ENCODE measurements at regions of chr12 and their contacts with region 1.

Region 1: DNA sequence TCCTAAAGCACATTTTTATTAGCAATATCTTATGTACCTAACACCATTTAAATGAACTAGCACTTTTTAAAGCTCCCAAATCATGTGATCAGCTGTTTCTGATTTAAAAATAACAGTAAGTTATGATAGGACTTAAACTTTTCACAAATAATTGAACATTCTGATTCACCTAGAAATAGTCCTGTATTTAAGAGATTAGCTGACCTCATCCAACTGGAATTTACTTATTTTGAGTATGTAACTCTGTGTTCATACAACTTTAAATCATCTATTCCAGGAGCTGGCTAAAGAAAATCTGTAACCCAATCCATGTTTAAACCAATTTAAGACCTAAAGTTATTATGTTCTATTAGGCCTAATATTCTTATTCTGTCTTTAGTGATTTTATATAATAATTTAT is 184.3 kb downstream of the CCDC91 start:
- DNase-seq: no peak
- H3K4me3 ChIP-seq: no peak overlapping the region
- H3K27ac ChIP-seq: no peak overlapping the region
- H3K4me1 ChIP-seq: no peaks in the 10 kb centered on the region
- H3K27me3 ChIP-seq: no peaks in the 10 kb centered on the region
- CTCF ChIP-seq: no peak
- POLR2A ChIP-seq: no peak

Region 2: GRCh38 chr12:27179400-27180214 is 1194.9 kb before region 1 on chr12:
- intact Hi-C with region 1: loop called (anchors 5 kb)
- DNase-seq: peak in 1 of 2 donors; percentile 29
- H3K4me3 ChIP-seq: no peak overlapping the region
- H3K27ac ChIP-seq: no peak overlapping the region
- H3K4me1 ChIP-seq: no peaks in the 10 kb centered on the region
- H3K27me3 ChIP-seq: no peaks in the 10 kb centered on the region
- CTCF ChIP-seq: no peak
- POLR2A ChIP-seq: no peak